ENCODE measurements at regions of chr13 and their contacts with region 1.

Region 1: DNA sequence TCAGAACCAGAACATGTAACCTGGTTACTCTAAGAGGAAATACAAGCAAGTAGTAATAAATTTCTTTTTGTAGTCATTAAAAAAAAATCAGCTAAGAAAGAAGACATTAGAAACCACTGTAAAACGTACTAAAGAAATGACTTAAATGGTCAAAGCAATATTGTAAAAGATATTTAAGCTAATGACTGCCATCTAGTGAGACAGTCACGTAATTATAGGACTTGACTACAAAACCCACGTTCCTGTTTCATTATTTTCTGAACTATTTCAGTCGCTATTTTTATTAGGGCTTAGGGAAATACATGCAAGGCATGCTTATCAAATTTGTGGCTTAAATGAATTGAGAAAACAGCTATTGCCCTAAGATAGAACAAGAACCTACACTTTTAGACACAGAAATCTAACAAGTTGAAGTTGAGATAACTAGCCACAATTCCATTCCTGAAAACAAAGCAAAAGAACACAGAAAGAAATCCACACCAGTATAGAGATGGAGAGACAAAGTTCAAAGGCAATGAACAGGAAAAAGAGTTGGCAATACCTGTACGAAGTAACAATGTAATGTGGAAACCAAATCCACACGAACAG is 17.9 kb downstream of the ALG5 start:
- DNase-seq: peak; percentile 44
- H3K4me3 ChIP-seq: no peak overlapping the region
- CTCF ChIP-seq: no peak

Region 2: GRCh38 chr13:36447501-36447900 is 533.7 kb before region 1 on chr13:
- in situ Hi-C with region 1: loop called (anchors 5 kb)
- DNase-seq: peak; percentile 71
- H3K4me3 ChIP-seq: no peak overlapping the region
- CTCF ChIP-seq: no peak

Region 3: DNA sequence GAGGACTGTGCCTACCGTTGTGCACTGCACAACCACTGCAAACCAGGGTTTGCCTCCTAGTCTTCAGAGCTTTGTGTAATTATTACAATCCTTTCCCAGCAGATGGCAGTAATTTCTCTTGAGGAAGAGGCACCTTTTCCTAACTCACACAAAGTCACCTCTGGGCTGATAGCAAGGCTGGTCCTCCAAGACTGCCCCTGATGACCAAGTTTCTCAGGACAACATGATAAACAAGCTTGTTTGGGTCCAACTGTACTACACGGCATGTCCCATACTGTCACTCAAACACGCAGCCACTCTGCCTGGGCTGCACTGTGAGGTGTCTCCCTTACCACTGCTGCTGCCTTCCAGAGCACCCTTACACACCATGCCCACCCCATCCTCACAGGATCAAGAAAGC is 123.0 kb before region 1 on chr13:
- in situ Hi-C with region 1: loop called (anchors 10 kb)
- DNase-seq: peak; percentile 40
- H3K4me3 ChIP-seq: no peak overlapping the region
- CTCF ChIP-seq: peak; percentile 60